ENCODE measurements at regions of chr3 and their contacts with region 1.

Region 1: GRCh38 chr3:100245927-100246326 is 14.9 kb upstream of the TBC1D23 start:
- DNase-seq: no peak

Region 2: GRCh38 chr3:100073899-100074307 is 172.0 kb before region 1 on chr3:
- in situ Hi-C with region 1: loop called (anchors 10 kb)
- DNase-seq: peak; percentile 94

Measured in KBM-7 (cell line).